ENCODE measurements at regions of chr7 and their contacts with region 1.

Region 1: DNA sequence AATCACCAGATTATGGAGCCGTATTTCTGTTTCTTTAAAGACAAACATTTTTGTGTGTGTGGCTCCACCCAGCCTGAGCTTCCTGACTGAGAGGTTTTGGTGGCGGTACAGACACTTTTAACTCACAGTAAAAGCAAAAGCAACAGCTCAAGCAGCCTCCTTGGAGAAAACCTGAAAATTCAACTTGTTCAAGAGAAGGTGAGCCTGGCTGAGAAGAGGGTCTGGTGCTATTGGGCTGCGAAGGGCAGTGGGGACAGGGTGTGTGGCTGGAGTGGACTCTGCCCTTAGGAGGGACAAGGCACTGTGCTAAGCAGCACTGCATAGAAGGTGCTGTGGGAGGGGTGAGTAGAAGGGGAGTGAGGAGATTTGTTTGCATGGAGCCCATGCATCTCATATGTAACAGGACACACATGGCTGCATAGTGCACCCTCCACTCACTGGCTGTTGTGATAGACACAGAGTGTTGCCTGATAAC is at the start of gene GIMAP7:
- DNase-seq: peak; percentile 77
- H3K4me3 Mint-ChIP-seq: peak within 1 kb of the TSS; percentile 100
- H3K27ac Mint-ChIP-seq: peak within 1 kb of the TSS; percentile 100
- H3K4me1 Mint-ChIP-seq: peaks cover 55% of the 10 kb centered on the region
- H3K27me3 Mint-ChIP-seq: no peaks in the 10 kb centered on the region
- total RNA-seq, gene GIMAP7: 169 to 171 TPM

Region 2: GRCh38 chr7:150502519-150502918 is 12.3 kb before region 1 on chr7:
- CTCF ChIA-PET with region 1: interaction called, 35 read pairs
- POLR2A ChIA-PET with region 1: interaction called, 108 read pairs
- DNase-seq: peak; percentile 68
- H3K4me3 Mint-ChIP-seq: peak overlapping the region; percentile 29
- H3K27ac Mint-ChIP-seq: peak overlapping the region; percentile 90
- H3K4me1 Mint-ChIP-seq: peaks cover 75% of the 10 kb centered on the region
- H3K27me3 Mint-ChIP-seq: no peaks in the 10 kb centered on the region

Region 3: DNA sequence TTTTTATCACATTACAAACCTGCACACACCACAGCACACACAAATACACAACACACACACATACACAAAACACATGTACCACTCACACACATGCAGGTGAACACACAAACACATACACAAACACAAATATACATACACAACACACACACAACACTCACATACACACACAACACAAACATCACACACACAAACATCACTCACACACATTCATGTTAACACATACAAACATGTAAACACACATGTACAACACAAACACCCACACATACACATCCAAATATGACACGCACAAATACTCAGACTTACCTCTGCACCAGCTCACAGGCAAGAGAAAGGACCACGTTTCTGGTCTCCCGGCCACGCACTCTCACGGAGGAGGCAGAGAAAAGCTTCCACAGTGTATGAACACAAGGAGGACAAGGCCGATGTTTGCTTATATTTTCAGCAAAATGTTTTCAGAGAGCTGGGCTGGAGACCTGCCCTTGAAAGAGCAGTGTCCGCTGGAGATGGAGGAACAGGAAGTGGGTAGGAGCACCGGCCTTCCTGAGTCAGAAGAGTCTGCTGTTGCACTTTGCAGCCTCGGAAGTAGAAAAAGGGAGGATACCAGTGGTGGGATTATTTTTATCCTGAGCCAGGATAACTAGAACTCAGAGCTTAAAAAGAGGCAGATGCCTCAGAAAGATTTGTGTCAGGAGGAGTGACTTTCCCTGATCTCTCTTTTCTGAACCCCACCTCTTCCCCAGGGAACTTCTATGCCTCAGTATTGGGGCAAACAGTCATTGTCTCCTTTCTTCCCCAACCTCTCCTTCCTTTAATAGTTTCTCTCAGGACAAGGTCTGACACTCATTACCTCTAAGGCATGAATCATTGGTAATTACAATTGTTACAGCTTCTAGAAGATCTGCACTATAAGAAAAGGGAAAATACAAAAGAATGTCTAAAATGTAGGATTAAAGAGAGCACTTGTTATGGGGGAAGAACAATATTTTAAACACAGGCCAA is 117.4 kb after region 1 on chr7 and contains the start of gene GIMAP6:
- CTCF ChIA-PET with region 1: no interaction called
- POLR2A ChIA-PET with region 1: interaction called, 20 read pairs
- DNase-seq: peak; percentile 56
- H3K4me3 Mint-ChIP-seq: peak within 1 kb of the TSS; percentile 98
- H3K27ac Mint-ChIP-seq: peak within 1 kb of the TSS; percentile 89
- H3K4me1 Mint-ChIP-seq: peaks cover 68% of the 10 kb centered on the region
- H3K27me3 Mint-ChIP-seq: no peaks in the 10 kb centered on the region
- total RNA-seq, gene GIMAP6: 84.9 to 85.9 TPM

Region 4: DNA sequence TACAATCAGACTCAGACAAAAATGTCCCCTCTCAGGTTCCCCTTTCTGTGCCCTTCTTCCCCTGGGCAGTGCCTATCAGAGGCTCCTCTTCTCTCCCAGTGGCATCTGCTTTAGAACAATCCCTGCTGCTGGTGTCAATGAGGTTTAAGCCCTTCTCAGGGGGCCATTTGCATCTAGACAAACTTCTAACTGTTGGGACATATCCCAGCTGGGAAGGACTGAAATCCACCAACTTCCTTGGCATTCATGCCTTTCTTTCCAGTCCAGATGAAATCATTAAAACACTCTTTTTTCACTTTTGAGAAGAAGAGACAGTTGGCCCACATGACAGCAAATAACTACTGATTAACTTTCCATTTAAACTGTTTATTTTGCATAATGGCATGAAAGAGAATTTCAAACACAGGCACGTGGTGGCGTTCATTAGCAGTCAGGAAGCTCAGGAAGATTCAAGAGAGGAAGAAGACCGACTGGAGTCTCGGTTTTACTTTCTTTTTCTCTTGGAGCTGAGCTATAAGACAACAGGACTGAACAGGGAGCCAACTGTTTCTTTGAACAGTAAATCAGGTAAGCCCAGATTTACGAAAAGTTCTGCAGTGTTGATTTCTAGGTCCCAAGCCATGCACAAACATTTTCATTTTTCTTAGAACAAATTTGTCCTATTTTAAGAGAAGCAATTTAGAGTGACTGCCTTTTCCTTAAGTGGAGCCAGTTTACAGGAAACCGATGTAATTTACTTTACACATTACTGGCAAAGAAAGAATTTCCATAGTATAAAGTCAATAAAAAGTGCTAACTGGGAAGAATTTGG is 170.6 kb after region 1 on chr7 and contains the start of gene GIMAP2:
- CTCF ChIA-PET with region 1: no interaction called
- POLR2A ChIA-PET with region 1: interaction called, 16 read pairs
- DNase-seq: peak; percentile 33
- H3K4me3 Mint-ChIP-seq: peak within 1 kb of the TSS; percentile 100
- H3K27ac Mint-ChIP-seq: peak within 1 kb of the TSS; percentile 98
- H3K4me1 Mint-ChIP-seq: peaks cover 76% of the 10 kb centered on the region
- H3K27me3 Mint-ChIP-seq: no peaks in the 10 kb centered on the region
- total RNA-seq, gene GIMAP2: 113 to 120 TPM

Region 5: GRCh38 chr7:150737265-150738055 is 222.7 kb after region 1 on chr7 and contains the start of gene GIMAP5:
- CTCF ChIA-PET with region 1: interaction called, 3 read pairs
- POLR2A ChIA-PET with region 1: interaction called, 28 read pairs
- DNase-seq: peak; percentile 65
- H3K4me3 Mint-ChIP-seq: peak within 1 kb of the TSS; percentile 99
- H3K27ac Mint-ChIP-seq: peak within 1 kb of the TSS; percentile 94
- H3K4me1 Mint-ChIP-seq: peaks cover 80% of the 10 kb centered on the region
- H3K27me3 Mint-ChIP-seq: no peaks in the 10 kb centered on the region
- total RNA-seq, gene GIMAP5: 83.9 to 84.3 TPM

Region 6: GRCh38 chr7:150753826-150754603 is 239.2 kb after region 1 on chr7:
- CTCF ChIA-PET with region 1: interaction called, 7 read pairs
- POLR2A ChIA-PET with region 1: interaction called, 44 read pairs
- DNase-seq: no peak
- H3K4me3 Mint-ChIP-seq: no peak overlapping the region
- H3K27ac Mint-ChIP-seq: peak overlapping the region; percentile 94
- H3K4me1 Mint-ChIP-seq: peaks cover 55% of the 10 kb centered on the region
- H3K27me3 Mint-ChIP-seq: no peaks in the 10 kb centered on the region

Measured in activated CD4-positive, alpha-beta memory T cell treated with anti-CD3 and anti-CD28 coated beads, Interleukin-2, amount 10 ng/mL, durations not matched to agents 7 days and 5 days (primary cell).